AG04450 (cell line): ENCODE measurements at regions of chr1 and their contacts with region 1.

Region 1: DNA sequence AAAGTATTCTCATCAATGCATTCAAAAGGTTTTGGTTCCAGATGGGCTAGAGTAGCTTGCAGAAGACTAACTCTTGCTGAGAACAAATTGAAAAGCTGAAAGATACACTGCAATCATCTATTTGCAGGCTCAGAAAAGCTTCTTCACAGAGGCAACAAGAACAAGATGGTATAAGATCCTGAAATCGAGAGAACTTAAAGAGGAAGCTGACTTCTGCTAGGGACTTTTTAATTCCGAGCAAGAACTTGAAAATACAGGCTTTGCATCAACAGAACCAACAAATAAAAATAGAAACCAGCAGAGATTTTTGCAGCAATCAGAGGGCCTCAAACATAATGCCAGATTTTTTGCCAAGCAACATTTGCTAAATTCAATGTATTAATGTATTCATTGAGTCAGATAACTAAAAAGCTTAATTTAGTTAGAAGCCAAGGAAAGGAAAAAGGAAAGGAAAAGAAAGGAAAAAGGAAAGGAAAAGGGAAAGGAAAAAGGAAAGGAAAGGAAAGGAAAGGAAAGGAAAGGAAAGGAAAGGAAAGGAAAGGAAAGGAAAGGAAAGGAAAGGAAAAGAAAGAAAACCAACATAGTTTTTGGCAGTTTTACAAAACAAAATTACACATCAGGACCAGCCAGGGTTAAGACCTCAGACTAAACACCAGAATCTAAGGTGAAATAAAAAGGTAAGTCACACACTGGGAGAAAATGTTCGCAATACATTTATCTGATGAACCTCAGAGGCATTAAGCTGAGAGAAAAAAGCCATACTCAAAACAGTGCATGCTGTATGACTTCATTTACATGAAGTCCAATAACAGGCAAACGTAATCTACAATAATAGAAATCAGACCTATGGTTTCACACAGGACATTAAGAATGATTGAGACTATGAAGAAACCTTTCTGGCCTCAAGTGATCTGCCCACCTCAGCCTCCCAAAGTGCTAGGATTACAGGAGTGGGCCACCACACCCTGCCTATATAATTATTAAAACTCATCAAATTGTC is 42.6 kb downstream of the FAF1 start:
- DNase-seq: no peak
- H3K4me3 ChIP-seq: no peak overlapping the region
- H3K27ac ChIP-seq: no peak overlapping the region
- H3K27me3 ChIP-seq: no peaks in the 10 kb centered on the region
- CTCF ChIP-seq: no peak

Region 2: GRCh38 chr1:50812346-50812745 is 105.1 kb before region 1 on chr1:
- CTCF ChIA-PET with region 1: no interaction called
- POLR2A ChIA-PET with region 1: no interaction called
- DNase-seq: no peak
- H3K4me3 ChIP-seq: no peak overlapping the region
- H3K27ac ChIP-seq: no peak overlapping the region
- H3K27me3 ChIP-seq: no peaks in the 10 kb centered on the region
- CTCF ChIP-seq: no peak

Region 3: GRCh38 chr1:50902419-50902818 is 15.0 kb before region 1 on chr1:
- CTCF ChIA-PET with region 1: interaction called, 13 read pairs
- POLR2A ChIA-PET with region 1: no interaction called
- DNase-seq: no peak
- H3K4me3 ChIP-seq: no peak overlapping the region
- H3K27ac ChIP-seq: no peak overlapping the region
- H3K27me3 ChIP-seq: no peaks in the 10 kb centered on the region
- CTCF ChIP-seq: no peak

Region 4: GRCh38 chr1:50936321-50936720 is 18.9 kb after region 1 on chr1:
- CTCF ChIA-PET with region 1: no interaction called
- POLR2A ChIA-PET with region 1: no interaction called
- DNase-seq: no peak
- H3K4me3 ChIP-seq: no peak overlapping the region
- H3K27ac ChIP-seq: no peak overlapping the region
- H3K27me3 ChIP-seq: no peaks in the 10 kb centered on the region
- CTCF ChIP-seq: no peak

Region 5: GRCh38 chr1:51760872-51761271 is 843.4 kb after region 1 on chr1:
- CTCF ChIA-PET with region 1: no interaction called
- POLR2A ChIA-PET with region 1: no interaction called
- DNase-seq: no peak
- H3K4me3 ChIP-seq: no peak overlapping the region
- H3K27ac ChIP-seq: no peak overlapping the region
- H3K27me3 ChIP-seq: no peaks in the 10 kb centered on the region
- CTCF ChIP-seq: no peak